K562 (cell line): ENCODE measurements at regions of chr18 and their contacts with region 1.

Region 1: GRCh38 chr18:36419905-36420531 is 122.5 kb downstream of the FHOD3 start:
- DNase-seq: peak in 1 of 4 experiments; percentile 25
- ATAC-seq: peak; percentile 50
- H3K4me3 ChIP-seq: no peak overlapping the region
- H3K27ac ChIP-seq: no peak overlapping the region
- H3K4me1 ChIP-seq: peaks cover 0 to 5% of the 10 kb centered on the region in 2 experiments; a peak in 3 of 5 replicates
- H3K27me3 ChIP-seq: peaks cover 0 to 11% of the 10 kb centered on the region in 2 experiments; a peak in 2 of 5 replicates
- CTCF ChIP-seq: peak; percentile 8 to 33 (median 32); a peak in 2 of 6 replicates
- EP300 ChIP-seq: no peak
- POLR2A ChIP-seq: no peak
- RAD21 ChIP-seq: no peak

Region 2: DNA sequence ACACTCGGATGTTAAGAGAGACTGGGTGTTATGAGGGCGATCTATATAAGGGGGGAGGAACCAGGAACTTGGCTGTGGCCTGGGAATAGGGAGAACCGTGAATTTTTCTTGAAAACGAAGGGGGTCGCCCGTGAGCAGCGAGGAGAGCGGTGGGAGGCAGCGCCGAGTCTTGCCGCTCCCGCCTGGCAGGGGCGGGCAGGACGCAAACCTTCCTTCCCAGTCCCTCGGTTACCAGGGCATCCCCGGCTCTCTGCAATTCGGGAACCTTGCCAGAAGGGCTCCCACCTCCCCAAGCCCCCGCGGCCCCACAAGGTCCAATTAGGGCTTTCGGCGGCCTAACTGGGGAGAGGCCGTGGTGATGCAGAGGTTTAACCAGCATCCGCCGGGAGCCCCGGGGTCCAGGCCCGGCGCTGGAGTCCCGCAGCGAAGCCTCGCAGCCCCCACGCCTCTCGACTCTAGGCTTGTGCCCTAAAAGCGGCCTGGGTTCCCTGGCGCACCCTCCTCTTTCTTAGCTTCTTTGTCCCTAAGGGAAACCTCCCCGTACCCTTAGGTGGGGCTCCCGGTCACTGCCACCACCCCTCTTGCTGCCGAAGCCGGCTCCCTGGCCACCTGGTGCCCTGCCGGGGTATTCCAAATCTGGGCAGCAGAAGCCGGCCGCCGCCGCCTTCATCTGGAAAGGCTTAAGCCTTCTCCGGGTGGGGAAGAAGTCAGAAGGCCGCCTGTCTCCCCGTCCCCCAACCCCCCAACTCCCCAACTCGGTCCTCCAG is 123.2 kb before region 1 on chr18:
- CTCF ChIA-PET with region 1: no interaction called
- POLR2A ChIA-PET with region 1: no interaction called
- in situ Hi-C with region 1: no loop called
- intact Hi-C with region 1: loop called (anchors 5 kb)
- DNase-seq: peak; percentile 60 to 67 (median 66)
- ATAC-seq: peak; percentile 84
- H3K4me3 ChIP-seq: peak overlapping the region; percentile 14; the same call in 1 of the 2 replicates
- H3K27ac ChIP-seq: no peak overlapping the region
- H3K4me1 ChIP-seq: peaks cover 0 to 20% of the 10 kb centered on the region in 2 experiments; a peak in 4 of 5 replicates
- H3K27me3 ChIP-seq: peaks cover 33 to 35% of the 10 kb centered on the region in 2 experiments
- CTCF ChIP-seq: peak; percentile 58 to 60 (median 59)
- EP300 ChIP-seq: no peak
- POLR2A ChIP-seq: no peak
- RAD21 ChIP-seq: peak in 1 of 2 experiments; percentile 56; a peak in 2 of 4 replicates